Adrenal gland (tissue), 19 donors: ENCODE measurements at regions of chr15 and their contacts with region 1.

Region 1: DNA sequence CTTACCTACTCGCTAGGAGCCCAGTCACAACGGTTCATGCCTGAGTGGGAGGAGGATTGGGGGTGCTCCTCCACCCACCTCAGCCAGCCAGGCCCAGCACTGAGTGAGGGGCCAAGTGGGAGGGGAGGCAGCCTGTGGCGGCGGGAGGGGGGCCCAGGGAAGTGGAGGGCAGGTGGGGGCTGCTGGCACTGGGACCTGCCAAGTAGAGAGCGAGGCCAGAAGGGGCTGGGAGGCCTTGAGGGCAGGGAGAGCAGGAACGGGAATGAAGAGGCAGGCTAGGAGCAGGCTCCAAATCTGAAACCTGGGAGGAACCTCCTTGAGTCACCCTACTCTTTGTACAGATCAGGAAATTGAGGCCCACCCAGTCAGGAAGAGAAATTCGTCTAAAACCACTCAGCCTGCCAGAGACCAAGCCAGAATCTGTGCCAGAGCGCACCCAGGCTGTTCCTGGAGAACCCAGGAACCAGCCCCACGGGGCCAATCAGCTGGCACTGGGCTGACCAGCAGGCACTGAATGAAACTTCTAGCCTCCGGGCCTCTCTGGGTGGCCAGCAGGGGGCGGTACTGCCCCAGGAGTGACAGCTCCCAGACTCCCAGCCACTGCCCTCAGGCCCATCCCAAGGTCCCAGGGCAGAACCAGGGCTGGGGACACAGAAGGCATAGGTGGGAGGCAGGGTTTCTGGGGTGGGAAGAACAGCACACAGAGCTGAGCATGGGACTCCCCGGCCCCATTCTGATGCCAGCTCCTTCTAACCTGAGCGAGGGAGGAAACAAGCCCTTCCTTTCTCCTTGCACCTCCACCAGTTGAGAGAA is 14.8 kb upstream of the CYP11A1 start:
- DNase-seq: peak; percentile 88 to 94 (median 92)
- H3K4me3 ChIP-seq: no peak overlapping the region
- H3K27ac ChIP-seq: no peak overlapping the region
- H3K4me1 ChIP-seq: no peaks in the 10 kb centered on the region
- H3K27me3 ChIP-seq: no peaks in the 10 kb centered on the region
- CTCF ChIP-seq: peak; percentile 96 to 99 (median 98)
- POLR2A ChIP-seq: no peak

Region 2: GRCh38 chr15:74322181-74323076 is 59.8 kb before region 1 on chr15:
- intact Hi-C with region 1: no loop called
- DNase-seq: peak; percentile 71 to 87 (median 83)
- H3K4me3 ChIP-seq: no peak overlapping the region
- H3K27ac ChIP-seq: peak overlapping the region in 1 of 5 donors; percentile 26
- H3K4me1 ChIP-seq: peaks cover 19 to 36% of the 10 kb centered on the region in 2 donors
- H3K27me3 ChIP-seq: no peaks in the 10 kb centered on the region
- CTCF ChIP-seq: peak; percentile 59 to 91 (median 84)
- POLR2A ChIP-seq: no peak

Region 3: DNA sequence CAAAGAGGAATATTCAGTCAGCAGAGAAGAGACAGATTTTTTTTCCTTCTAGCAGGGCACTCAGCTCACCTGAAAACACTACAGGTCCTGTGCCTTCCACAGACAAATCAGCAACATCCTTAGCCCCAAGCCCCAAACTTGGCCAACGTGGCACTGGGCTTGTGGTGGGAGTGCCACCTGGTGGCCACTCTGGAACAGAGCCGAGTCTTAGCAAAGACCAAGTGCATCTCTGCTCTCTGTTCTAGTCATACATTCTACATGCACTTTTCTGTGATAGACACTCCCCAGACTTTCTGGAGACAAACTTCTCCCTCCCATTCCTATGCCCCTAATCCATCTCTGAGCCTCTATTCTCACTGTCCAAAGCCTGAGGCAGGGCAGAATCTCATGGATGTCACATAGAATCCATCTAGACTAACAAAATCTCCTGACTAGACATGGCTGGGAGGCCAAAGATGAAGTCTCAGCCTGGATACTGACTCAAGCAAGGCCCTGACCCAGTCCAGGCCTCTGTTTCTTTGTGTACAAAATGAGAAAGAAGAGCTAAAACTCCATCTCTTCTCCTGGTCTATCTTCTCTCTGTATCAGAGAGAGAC is 56.6 kb after region 1 on chr15:
- intact Hi-C with region 1: loop called (anchors 2 kb)
- DNase-seq: peak; percentile 68 to 89 (median 78)
- H3K4me3 ChIP-seq: no peak overlapping the region
- H3K27ac ChIP-seq: no peak overlapping the region
- H3K4me1 ChIP-seq: peaks cover 0 to 7% of the 10 kb centered on the region in 2 donors
- H3K27me3 ChIP-seq: no peaks in the 10 kb centered on the region
- CTCF ChIP-seq: peak; percentile 87 to 96 (median 96)
- POLR2A ChIP-seq: no peak

Region 4: GRCh38 chr15:74489518-74490338 is 107.5 kb after region 1 on chr15:
- intact Hi-C with region 1: loop called (anchors 5 to 10 kb)
- DNase-seq: peak; percentile 31 to 65 (median 41)
- H3K4me3 ChIP-seq: no peak overlapping the region
- H3K27ac ChIP-seq: no peak overlapping the region
- H3K4me1 ChIP-seq: no peaks in the 10 kb centered on the region
- H3K27me3 ChIP-seq: no peaks in the 10 kb centered on the region
- CTCF ChIP-seq: peak; percentile 24 to 59 (median 47)
- POLR2A ChIP-seq: no peak

Region 5: DNA sequence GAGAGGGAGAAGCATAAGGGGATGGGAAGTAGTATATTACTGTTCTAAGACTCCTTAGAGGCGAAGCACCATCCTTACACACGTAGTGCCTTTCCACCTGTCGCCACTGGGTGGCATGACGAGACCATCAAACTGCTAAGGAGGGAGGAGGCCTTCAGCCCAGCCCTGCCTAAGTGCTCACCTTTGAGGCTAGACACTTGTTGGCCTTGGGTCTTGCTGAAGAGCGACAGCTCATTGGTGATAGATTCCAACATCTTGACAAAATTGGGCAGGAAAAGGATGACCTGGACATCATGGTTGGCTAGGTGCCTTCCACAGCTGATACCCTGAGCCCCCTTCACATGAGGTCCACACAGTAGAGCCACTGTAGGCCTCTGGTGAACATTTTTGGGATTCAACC is 253.0 kb after region 1 on chr15:
- intact Hi-C with region 1: loop called in 1 of 2 experiments (anchors 10 kb)
- DNase-seq: peak; percentile 54 to 80 (median 63)
- H3K4me3 ChIP-seq: no peak overlapping the region
- H3K27ac ChIP-seq: no peak overlapping the region
- H3K4me1 ChIP-seq: no peaks in the 10 kb centered on the region
- H3K27me3 ChIP-seq: no peaks in the 10 kb centered on the region
- CTCF ChIP-seq: peak; percentile 60 to 92 (median 88)
- POLR2A ChIP-seq: no peak

Region 6: GRCh38 chr15:74768771-74769342 is 386.6 kb after region 1 on chr15:
- intact Hi-C with region 1: loop called in 1 of 2 experiments (anchors 10 kb)
- DNase-seq: peak in 6 of 7 donors; percentile 52 to 80 (median 68)
- H3K4me3 ChIP-seq: no peak overlapping the region
- H3K27ac ChIP-seq: no peak overlapping the region
- H3K4me1 ChIP-seq: no peaks in the 10 kb centered on the region
- H3K27me3 ChIP-seq: no peaks in the 10 kb centered on the region
- CTCF ChIP-seq: peak; percentile 75 to 88 (median 84)
- POLR2A ChIP-seq: no peak